ENCODE measurements at regions of chr9 and their contacts with region 1.

Region 1: GRCh38 chr9:71911253-71912074 is at the start of gene C9orf85:
- DNase-seq: peak; percentile 97
- H3K4me3 Mint-ChIP-seq: peak within 1 kb of the TSS; percentile 99
- H3K27ac Mint-ChIP-seq: peak within 1 kb of the TSS; percentile 92
- H3K4me1 Mint-ChIP-seq: peaks cover 55% of the 10 kb centered on the region
- H3K27me3 Mint-ChIP-seq: no peaks in the 10 kb centered on the region
- total RNA-seq, gene C9orf85: 6.2 to 6.7 TPM

Region 2: DNA sequence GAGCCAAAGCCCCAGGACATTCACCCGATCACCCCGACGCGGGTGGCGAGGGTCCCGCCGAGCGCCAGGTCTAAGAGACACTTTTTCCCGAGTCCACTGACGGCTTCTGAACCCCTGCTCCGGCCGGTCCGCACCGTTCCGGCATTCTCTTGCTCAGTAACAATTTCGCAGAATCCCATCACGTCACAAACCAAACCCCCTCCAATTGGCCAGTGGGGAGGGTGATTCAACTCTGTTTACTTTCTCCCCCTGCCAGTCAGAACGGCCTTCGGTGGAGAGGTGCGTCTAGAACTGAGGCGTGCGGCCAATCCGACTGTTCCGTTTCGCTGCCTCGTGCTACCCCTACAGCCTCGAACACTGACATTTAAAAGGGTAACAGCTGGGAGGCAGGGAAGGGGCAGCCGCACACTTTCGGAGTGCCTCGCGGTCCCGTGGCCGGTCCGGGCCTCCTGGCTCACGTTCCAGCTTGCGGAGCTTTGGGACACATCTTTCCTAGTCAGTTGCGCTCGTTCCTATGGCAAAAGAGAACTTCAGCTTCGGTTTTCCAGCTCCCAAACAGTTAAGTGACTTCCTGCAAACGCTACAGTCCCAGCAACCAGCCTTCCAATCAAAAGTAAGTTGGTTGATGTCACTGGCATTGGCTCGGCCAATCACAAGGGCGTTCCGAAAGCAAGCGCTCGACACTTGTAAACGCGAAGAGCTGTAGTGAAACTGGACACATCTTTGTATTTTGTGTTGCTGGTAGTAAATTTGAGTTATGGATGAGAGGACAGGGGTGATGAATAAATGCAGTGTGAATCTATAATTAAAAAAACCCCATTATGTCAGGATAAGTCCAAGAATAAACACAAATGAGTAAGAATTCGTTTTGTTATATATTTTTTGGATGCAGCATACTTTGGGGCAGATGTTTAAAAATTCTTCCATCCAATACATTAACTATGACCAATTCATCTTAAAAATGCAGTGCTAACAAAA is 1497.4 kb before region 1 on chr9 and contains the start of gene KLF9:
- CTCF ChIA-PET with region 1: no interaction called
- intact Hi-C with region 1: loop called (anchors 2 kb)
- DNase-seq: peak; percentile 96
- H3K4me3 Mint-ChIP-seq: peak within 1 kb of the TSS; percentile 100
- H3K27ac Mint-ChIP-seq: peak within 1 kb of the TSS; percentile 100
- H3K4me1 Mint-ChIP-seq: peaks cover 39% of the 10 kb centered on the region
- H3K27me3 Mint-ChIP-seq: no peaks in the 10 kb centered on the region
- total RNA-seq, gene KLF9: 44.2 to 45.0 TPM

Region 3: GRCh38 chr9:71795097-71795813 is 116.2 kb before region 1 on chr9:
- CTCF ChIA-PET with region 1: interaction called, 4 read pairs
- intact Hi-C with region 1: loop called (anchors 1 kb)
- DNase-seq: no peak
- H3K4me3 Mint-ChIP-seq: no peak overlapping the region
- H3K27ac Mint-ChIP-seq: peak overlapping the region; percentile 72
- H3K4me1 Mint-ChIP-seq: peaks cover 61% of the 10 kb centered on the region
- H3K27me3 Mint-ChIP-seq: no peaks in the 10 kb centered on the region

Region 4: GRCh38 chr9:71885467-71885866 is 26.0 kb before region 1 on chr9:
- CTCF ChIA-PET with region 1: no interaction called
- intact Hi-C with region 1: loop called (anchors 1 kb)
- DNase-seq: no peak
- H3K4me3 Mint-ChIP-seq: no peak overlapping the region
- H3K27ac Mint-ChIP-seq: no peak overlapping the region
- H3K4me1 Mint-ChIP-seq: peaks cover 33% of the 10 kb centered on the region
- H3K27me3 Mint-ChIP-seq: no peaks in the 10 kb centered on the region

Region 5: GRCh38 chr9:71984403-71984802 is 72.9 kb after region 1 on chr9:
- CTCF ChIA-PET with region 1: no interaction called
- intact Hi-C with region 1: no loop called
- DNase-seq: no peak
- H3K4me3 Mint-ChIP-seq: no peak overlapping the region
- H3K27ac Mint-ChIP-seq: no peak overlapping the region
- H3K4me1 Mint-ChIP-seq: no peaks in the 10 kb centered on the region
- H3K27me3 Mint-ChIP-seq: no peaks in the 10 kb centered on the region

Region 6: DNA sequence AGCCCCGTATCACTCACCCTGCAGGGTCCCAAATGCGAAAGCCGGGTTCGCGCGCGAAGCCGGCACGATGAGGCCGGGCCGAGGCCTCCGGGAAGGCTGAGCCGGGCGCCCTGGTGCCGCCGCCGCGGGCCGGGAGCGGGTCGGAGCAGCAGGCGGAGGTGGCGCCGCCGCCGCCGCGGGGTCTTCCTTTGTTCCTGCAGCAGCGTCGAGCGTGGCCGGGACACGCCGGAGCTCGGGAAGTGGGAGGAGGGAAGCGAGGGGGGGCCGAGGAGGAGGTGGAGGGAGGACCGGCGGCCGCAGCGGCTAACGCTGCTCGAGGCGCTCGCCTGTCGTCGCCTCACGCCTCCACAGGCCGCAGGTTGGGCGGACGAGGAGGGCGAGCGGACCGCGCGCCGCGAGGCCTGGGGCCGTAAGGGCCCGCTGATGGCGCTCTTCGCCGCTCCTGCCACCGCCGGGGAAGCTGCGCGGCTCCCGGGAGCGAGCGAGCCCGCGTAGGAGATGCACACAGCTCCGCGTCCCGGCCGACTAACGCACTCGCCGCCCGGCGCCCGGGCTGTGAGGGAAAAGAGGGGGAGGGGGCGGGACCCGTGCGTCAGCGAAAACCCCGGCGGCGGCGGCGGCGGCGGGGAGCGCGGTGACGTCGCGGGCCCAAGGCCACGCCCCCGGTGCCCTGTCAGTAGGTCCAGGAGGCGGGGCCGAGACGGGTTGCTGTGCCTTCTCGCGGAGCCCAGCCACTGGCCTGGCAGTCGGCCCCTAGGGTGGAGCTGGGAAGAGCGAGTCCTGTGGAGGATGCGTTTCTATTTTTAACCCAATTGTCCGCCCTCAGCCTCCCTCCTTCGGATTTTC is 453.4 kb after region 1 on chr9 and contains the start of gene ZFAND5:
- CTCF ChIA-PET with region 1: no interaction called
- intact Hi-C with region 1: loop called (anchors 1 kb)
- DNase-seq: peak; percentile 94
- H3K4me3 Mint-ChIP-seq: peak within 1 kb of the TSS; percentile 82
- H3K27ac Mint-ChIP-seq: peak within 1 kb of the TSS; percentile 95
- H3K4me1 Mint-ChIP-seq: peaks cover 31% of the 10 kb centered on the region
- H3K27me3 Mint-ChIP-seq: no peaks in the 10 kb centered on the region
- total RNA-seq, gene ZFAND5: 71.9 to 73.2 TPM